Common myeloid progenitor, CD34-positive (primary cell): ENCODE measurements at regions of chr1 and their contacts with region 1.

Region 1: GRCh38 chr1:155218854-155219591 is 10.5 kb downstream of the MTX1 start:
- DNase-seq: peak; percentile 38 to 77 (median 73)
- H3K4me3 ChIP-seq: peak overlapping the region in 5 of 7 experiments; percentile 13 to 58 (median 28)
- H3K27ac ChIP-seq: peak overlapping the region in 1 of 2 experiments; percentile 43
- H3K4me1 ChIP-seq: peaks cover 13 to 33% (median 21%) of the 10 kb centered on the region in 4 experiments
- H3K27me3 ChIP-seq: no peaks in the 10 kb centered on the region

Region 2: DNA sequence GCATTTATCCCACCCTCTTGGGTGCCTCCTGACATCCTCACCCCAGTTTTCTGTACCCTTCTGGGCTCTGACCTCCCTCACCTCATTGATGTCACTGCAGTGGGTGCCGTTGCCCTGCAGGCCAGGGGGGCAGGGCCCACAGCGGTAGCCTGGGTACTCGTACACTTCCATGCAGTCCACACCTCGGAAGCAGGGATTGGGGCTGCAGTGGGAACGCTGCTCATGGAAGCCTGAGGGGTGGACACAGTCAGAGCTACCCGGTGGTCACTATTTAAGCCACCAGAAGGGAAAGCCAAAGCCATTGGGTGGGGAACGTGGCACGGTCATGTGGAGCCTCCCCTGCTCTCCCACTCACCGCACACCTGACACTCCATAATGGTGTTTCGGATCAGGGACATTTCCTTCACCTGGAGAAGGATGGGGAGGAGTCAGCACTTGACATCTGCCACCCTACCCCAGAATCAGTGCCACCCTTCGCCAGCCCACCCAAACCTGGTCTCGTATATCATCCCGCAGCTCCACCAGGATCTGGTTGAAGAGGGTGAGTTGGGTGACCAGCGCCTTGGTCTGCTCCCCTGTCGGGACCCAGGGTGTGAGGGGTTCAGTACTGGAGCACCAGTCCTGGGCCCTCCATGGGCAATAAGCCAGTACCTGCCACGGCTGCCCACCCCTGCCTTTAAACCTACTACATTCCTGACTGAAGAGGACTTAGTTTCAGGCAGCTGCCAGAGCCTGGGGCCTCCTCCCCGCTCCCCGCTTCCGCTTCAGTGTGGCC is 16.1 kb before region 1 on chr1:
- CTCF ChIA-PET with region 1: interaction called, 59 read pairs
- POLR2A ChIA-PET with region 1: no interaction called
- DNase-seq: no peak
- H3K4me3 ChIP-seq: no peak overlapping the region
- H3K27ac ChIP-seq: no peak overlapping the region
- H3K4me1 ChIP-seq: peaks cover 2 to 14% (median 13%) of the 10 kb centered on the region in 4 experiments
- H3K27me3 ChIP-seq: no peaks in the 10 kb centered on the region

Region 3: GRCh38 chr1:155360051-155360450 is 141.0 kb after region 1 on chr1:
- CTCF ChIA-PET with region 1: no interaction called
- POLR2A ChIA-PET with region 1: no interaction called
- DNase-seq: no peak
- H3K4me3 ChIP-seq: no peak overlapping the region
- H3K27ac ChIP-seq: no peak overlapping the region
- H3K4me1 ChIP-seq: no peaks in the 10 kb centered on the region
- H3K27me3 ChIP-seq: no peaks in the 10 kb centered on the region